Heart right ventricle (tissue), 16 donors: ENCODE measurements at regions of chr10 and their contacts with region 1.

Region 1: GRCh38 chr10:27223964-27224363 is 16.6 kb downstream of the ACBD5 start:
- DNase-seq: peak in 1 of 2 donors; percentile 39
- ATAC-seq: no peak
- H3K4me3 ChIP-seq: no peak overlapping the region
- H3K27ac ChIP-seq: no peak overlapping the region
- H3K4me1 ChIP-seq: peaks cover 0 to 5% (median 0%) of the 10 kb centered on the region in 9 donors
- H3K27me3 ChIP-seq: no peaks in the 10 kb centered on the region
- CTCF ChIP-seq: peak; percentile 35 to 70 (median 59)

Region 2: DNA sequence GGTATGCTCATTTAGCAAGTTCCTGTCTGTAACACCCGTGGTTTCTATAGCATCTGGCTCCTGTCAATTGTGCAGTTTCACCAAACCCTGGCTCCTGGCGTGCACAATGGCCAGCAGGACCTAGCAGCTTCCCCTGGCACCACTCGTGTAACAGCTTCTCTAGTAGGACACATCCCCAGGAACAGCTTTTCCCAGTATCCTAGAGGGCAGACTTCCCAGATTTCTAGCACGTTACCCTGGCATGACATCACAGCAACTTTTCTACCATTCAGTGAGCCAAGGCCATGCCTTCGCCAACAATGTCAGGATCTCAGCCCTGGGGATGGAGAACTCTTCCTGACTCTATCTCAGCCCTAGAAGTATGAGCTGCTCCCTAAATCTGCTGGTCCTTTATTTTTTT is 76.3 kb before region 1 on chr10:
- intact Hi-C with region 1: loop called in 1 of 10 experiments (anchors 10 kb)
- DNase-seq: peak in 1 of 2 donors; percentile 32
- ATAC-seq: peak in 7 of 8 donors; percentile 72 to 94 (median 85)
- H3K4me3 ChIP-seq: no peak overlapping the region
- H3K27ac ChIP-seq: peak overlapping the region in 1 of 10 donors; percentile 4
- H3K4me1 ChIP-seq: peaks cover 2 to 46% (median 25%) of the 10 kb centered on the region in 9 donors
- H3K27me3 ChIP-seq: no peaks in the 10 kb centered on the region
- CTCF ChIP-seq: no peak

Region 3: GRCh38 chr10:27285108-27285507 is 61.1 kb after region 1 on chr10:
- intact Hi-C with region 1: loop called in 2 of 10 experiments (anchors 2 to 10 kb)
- DNase-seq: peak in 1 of 2 donors; percentile 26
- ATAC-seq: peak in 4 of 8 donors; percentile 46 to 66 (median 58)
- H3K4me3 ChIP-seq: no peak overlapping the region
- H3K27ac ChIP-seq: no peak overlapping the region
- H3K4me1 ChIP-seq: no peaks in the 10 kb centered on the region
- H3K27me3 ChIP-seq: no peaks in the 10 kb centered on the region
- CTCF ChIP-seq: peak in 7 of 9 donors; percentile 38 to 63 (median 44)

Region 4: DNA sequence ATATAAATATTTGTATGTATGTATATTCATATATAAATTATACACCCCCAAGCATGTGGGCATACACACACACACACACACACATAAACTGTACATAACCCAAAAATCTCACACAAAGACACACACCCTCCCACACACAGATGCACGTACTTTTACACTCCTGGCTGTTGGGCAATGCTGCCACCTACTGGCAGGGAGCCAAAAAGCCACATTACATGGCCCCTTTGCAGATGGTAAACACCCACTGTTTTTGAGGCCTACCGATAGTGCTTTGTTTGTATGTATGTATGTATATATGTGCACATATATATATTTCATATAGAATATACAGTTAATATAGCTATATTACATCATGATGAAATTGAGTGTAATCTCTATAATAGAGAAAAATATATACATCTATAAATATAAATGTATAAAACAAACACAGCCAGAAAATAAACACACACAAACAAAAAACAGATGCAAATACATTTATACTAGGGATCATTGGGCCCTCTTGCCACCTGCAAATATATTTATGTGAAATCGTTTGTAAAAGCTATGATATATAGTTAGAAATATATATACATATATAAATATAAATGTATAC is 136.7 kb after region 1 on chr10:
- intact Hi-C with region 1: loop called in 6 of 10 experiments (anchors 5 to 10 kb)
- DNase-seq: peak; percentile 57 to 64
- ATAC-seq: peak in 5 of 8 donors; percentile 53 to 78 (median 71)
- H3K4me3 ChIP-seq: no peak overlapping the region
- H3K27ac ChIP-seq: no peak overlapping the region
- H3K4me1 ChIP-seq: no peaks in the 10 kb centered on the region
- H3K27me3 ChIP-seq: no peaks in the 10 kb centered on the region
- CTCF ChIP-seq: peak; percentile 31 to 82 (median 73)